ENCODE measurements at regions of chr3 and their contacts with region 1.

Region 1: DNA sequence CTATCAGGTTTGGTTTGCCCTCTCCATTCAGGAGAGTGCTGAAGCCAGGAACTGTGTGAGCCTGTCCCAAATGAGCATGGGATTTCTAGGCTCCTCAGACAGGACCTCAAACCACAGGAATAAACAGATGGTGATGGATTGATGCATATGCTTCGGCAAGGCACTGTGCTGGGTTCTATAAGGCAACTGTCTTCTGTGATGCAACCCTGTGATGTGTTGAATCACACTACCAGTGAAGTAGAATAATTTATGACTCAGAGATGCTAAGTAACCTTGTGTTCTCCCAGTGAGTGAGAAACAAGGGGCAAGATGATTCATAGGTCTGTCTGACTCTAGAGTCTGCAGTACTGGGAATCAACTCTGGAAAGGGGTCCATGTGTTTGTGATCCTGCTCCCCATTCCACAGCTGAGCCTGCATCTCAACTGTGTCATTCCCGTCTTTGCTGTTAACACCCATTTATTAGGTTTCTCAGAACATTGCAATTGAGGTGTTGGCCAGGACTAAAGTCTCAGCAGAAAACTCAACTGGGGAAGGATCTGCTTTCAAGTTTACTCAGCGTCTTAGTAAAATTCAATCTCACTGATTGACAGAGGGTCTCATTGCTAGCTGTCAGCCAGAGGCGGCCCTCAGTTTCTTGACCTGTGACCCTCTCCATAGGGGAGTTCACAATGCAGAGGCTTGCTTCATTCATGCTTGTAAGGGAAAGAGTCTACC is 510.1 kb upstream of the CFAP20DC start:
- DNase-seq: peak; percentile 71
- H3K4me3 Mint-ChIP-seq: no peak overlapping the region
- H3K27ac Mint-ChIP-seq: peak overlapping the region; percentile 84
- H3K4me1 Mint-ChIP-seq: peaks cover 24% of the 10 kb centered on the region
- H3K27me3 Mint-ChIP-seq: no peaks in the 10 kb centered on the region

Region 2: DNA sequence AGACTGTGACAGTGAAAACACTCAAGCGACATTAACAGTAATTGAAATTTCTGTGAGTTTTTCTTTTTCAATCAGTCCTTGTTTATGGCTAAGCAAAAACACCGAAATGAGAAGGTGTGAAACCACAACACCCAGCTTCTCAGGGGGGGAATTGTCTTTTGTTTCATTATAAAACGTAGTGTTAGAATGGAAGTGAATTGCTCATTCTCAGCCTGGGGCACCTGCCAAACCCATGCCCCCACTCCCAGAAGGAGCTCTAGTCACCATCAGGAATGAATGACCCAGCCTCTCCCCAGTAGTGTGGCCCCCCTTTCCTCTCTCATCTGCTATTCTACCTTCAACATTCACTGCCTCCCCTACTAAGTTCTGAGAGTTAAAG is 324.3 kb before region 1 on chr3:
- CTCF ChIA-PET with region 1: no interaction called
- intact Hi-C with region 1: loop called (anchors 1 kb)
- DNase-seq: peak; percentile 74
- H3K4me3 Mint-ChIP-seq: no peak overlapping the region
- H3K27ac Mint-ChIP-seq: no peak overlapping the region
- H3K4me1 Mint-ChIP-seq: peaks cover 8% of the 10 kb centered on the region
- H3K27me3 Mint-ChIP-seq: no peaks in the 10 kb centered on the region

Region 3: GRCh38 chr3:59444294-59444671 is 115.6 kb before region 1 on chr3:
- CTCF ChIA-PET with region 1: no interaction called
- intact Hi-C with region 1: loop called (anchors 1 kb)
- DNase-seq: peak; percentile 66
- H3K4me3 Mint-ChIP-seq: peak overlapping the region; percentile 54
- H3K27ac Mint-ChIP-seq: peak overlapping the region; percentile 94
- H3K4me1 Mint-ChIP-seq: peaks cover 53% of the 10 kb centered on the region
- H3K27me3 Mint-ChIP-seq: no peaks in the 10 kb centered on the region

Region 4: DNA sequence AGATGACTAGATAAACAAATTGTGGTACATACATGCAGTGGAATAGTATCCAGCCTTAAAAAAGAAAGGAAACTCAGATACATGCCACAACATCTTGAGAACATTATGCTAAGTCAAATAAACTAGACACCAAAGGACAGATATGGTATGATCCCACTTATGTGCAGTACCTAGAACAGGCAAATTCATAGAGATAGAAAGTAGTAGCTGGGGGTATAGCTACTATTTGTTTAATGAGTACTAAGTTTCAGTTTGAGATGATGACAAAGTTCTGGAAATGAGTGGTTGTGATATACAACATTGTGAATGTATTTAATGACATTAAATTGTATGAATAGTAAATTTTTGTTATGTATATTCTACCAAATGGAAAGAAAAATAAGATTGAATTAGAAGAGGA is 32.9 kb before region 1 on chr3:
- CTCF ChIA-PET with region 1: no interaction called
- intact Hi-C with region 1: loop called (anchors 1 kb)
- DNase-seq: no peak
- H3K4me3 Mint-ChIP-seq: no peak overlapping the region
- H3K27ac Mint-ChIP-seq: no peak overlapping the region
- H3K4me1 Mint-ChIP-seq: peaks cover 15% of the 10 kb centered on the region
- H3K27me3 Mint-ChIP-seq: peaks cover 2% of the 10 kb centered on the region

Region 5: GRCh38 chr3:59540696-59541095 is 19.2 kb before region 1 on chr3:
- CTCF ChIA-PET with region 1: no interaction called
- intact Hi-C with region 1: no loop called
- DNase-seq: no peak
- H3K4me3 Mint-ChIP-seq: no peak overlapping the region
- H3K27ac Mint-ChIP-seq: no peak overlapping the region
- H3K4me1 Mint-ChIP-seq: peaks cover 16% of the 10 kb centered on the region
- H3K27me3 Mint-ChIP-seq: no peaks in the 10 kb centered on the region

Region 6: GRCh38 chr3:61251174-61251972 is 1691.5 kb after region 1 on chr3 and contains the start of gene FHIT:
- CTCF ChIA-PET with region 1: no interaction called
- intact Hi-C with region 1: loop called (anchors 1 kb)
- DNase-seq: peak; percentile 96
- H3K4me3 Mint-ChIP-seq: peak within 1 kb of the TSS; percentile 91
- H3K27ac Mint-ChIP-seq: peak within 1 kb of the TSS; percentile 87
- H3K4me1 Mint-ChIP-seq: peaks cover 11% of the 10 kb centered on the region
- H3K27me3 Mint-ChIP-seq: peaks cover under 1% of the 10 kb centered on the region
- total RNA-seq, gene FHIT: 20.2 to 22.7 TPM

Measured in activated naive CD4-positive, alpha-beta T cell treated with anti-CD3 and anti-CD28 coated beads for 36 hours (primary cell).